Colonic mucosa (tissue), 4 donors: ENCODE measurements at regions of chr3 and their contacts with region 1.

Region 1: GRCh38 chr3:30199096-30199759 is 407.2 kb upstream of the TGFBR2 start:
- DNase-seq: peak; percentile 72
- H3K4me3 ChIP-seq: no peak overlapping the region
- H3K27ac ChIP-seq: no peak overlapping the region
- H3K4me1 ChIP-seq: no peaks in the 10 kb centered on the region
- H3K27me3 ChIP-seq: no peaks in the 10 kb centered on the region
- CTCF ChIP-seq: peak; percentile 74

Region 2: GRCh38 chr3:30012941-30013543 is 186.2 kb before region 1 on chr3:
- intact Hi-C with region 1: loop called (anchors 10 kb)
- DNase-seq: peak; percentile 82
- H3K4me3 ChIP-seq: no peak overlapping the region
- H3K27ac ChIP-seq: no peak overlapping the region
- H3K4me1 ChIP-seq: no peaks in the 10 kb centered on the region
- H3K27me3 ChIP-seq: no peaks in the 10 kb centered on the region
- CTCF ChIP-seq: peak; percentile 55

Region 3: GRCh38 chr3:30042274-30042859 is 156.9 kb before region 1 on chr3:
- intact Hi-C with region 1: loop called (anchors 2 kb)
- DNase-seq: peak; percentile 77
- H3K4me3 ChIP-seq: no peak overlapping the region
- H3K27ac ChIP-seq: no peak overlapping the region
- H3K4me1 ChIP-seq: no peaks in the 10 kb centered on the region
- H3K27me3 ChIP-seq: no peaks in the 10 kb centered on the region
- CTCF ChIP-seq: peak; percentile 63

Region 4: DNA sequence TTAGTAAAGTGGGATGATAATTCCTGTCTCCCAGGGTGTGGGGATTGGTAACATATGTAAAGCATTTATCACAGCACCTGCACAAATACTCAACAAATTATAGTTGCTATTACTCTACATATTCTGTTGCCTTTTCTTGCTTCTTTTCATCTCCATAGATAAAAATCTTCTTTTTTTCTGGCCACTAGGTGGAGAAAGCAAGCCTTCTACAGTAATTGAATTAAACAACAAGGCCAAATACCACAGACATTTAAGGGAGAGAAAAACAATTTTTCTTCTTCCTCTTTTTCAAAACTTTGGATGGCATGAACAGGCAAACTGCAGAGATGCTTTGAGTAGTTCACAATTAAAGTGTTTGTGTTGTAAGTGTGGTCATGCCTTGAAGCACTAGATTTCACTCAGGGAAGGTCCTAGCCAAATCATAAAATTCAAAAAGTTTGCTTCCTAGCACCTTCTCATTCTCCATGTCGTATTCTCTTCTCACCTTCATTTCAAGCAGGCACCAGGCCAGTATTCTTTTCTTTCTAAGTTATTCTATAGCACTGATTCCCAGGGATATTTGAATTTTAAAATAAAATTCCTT is 86.2 kb before region 1 on chr3:
- intact Hi-C with region 1: loop called (anchors 5 kb)
- DNase-seq: no peak
- H3K4me3 ChIP-seq: no peak overlapping the region
- H3K27ac ChIP-seq: no peak overlapping the region
- H3K4me1 ChIP-seq: no peaks in the 10 kb centered on the region
- H3K27me3 ChIP-seq: no peaks in the 10 kb centered on the region
- CTCF ChIP-seq: peak; percentile 59

Region 5: DNA sequence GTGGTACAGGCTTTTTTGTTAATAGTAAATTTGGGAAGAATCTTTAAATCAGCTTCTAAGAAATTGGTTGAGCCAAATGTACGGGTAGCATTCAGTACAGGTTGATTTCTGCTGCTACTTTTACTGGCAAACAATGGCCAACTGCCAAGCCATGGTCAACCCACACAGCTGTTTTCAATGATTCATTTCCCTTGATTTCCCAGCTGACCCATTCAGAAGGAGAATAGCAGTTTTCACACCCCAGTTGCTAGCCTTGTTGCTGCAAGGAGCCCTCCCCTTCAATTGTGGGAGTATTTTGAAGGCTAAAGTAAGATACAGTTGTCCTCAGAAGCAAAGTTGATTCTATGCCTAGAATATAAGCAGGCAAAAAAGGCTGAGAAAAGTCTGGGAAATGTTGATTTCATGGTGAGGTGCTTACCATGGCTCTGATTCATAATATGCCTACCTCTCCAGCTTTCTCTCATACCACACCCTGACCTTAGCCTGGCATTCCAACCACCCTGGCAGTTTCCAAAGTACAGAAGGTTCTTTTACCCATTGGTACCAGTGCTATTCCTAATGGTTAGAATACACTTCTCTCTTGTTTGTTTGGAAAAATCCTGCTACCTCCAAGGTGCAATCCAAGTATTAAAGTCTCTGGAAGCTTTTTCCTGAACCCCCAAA is 86.9 kb after region 1 on chr3:
- intact Hi-C with region 1: no loop called
- DNase-seq: peak; percentile 66
- H3K4me3 ChIP-seq: no peak overlapping the region
- H3K27ac ChIP-seq: peak overlapping the region; percentile 21
- H3K4me1 ChIP-seq: peaks cover 7% of the 10 kb centered on the region
- H3K27me3 ChIP-seq: no peaks in the 10 kb centered on the region
- CTCF ChIP-seq: no peak

Region 6: GRCh38 chr3:30693470-30694120 is 494.4 kb after region 1 on chr3:
- intact Hi-C with region 1: loop called (anchors 10 kb)
- DNase-seq: peak; percentile 47
- H3K4me3 ChIP-seq: no peak overlapping the region
- H3K27ac ChIP-seq: no peak overlapping the region
- H3K4me1 ChIP-seq: peaks cover 4% of the 10 kb centered on the region
- H3K27me3 ChIP-seq: no peaks in the 10 kb centered on the region
- CTCF ChIP-seq: peak; percentile 67